Heart right ventricle (tissue), 16 donors: ENCODE measurements at regions of chr6 and their contacts with region 1.

Region 1: GRCh38 chr6:14228571-14228970 is 111.0 kb downstream of the CD83 start:
- DNase-seq: no peak
- ATAC-seq: peak in 1 of 8 donors; percentile 41
- H3K4me3 ChIP-seq: no peak overlapping the region
- H3K27ac ChIP-seq: no peak overlapping the region
- H3K4me1 ChIP-seq: peaks cover 0 to 8% (median 0%) of the 10 kb centered on the region in 9 donors
- H3K27me3 ChIP-seq: no peaks in the 10 kb centered on the region
- CTCF ChIP-seq: no peak

Region 2: GRCh38 chr6:13538084-13538483 is 690.5 kb before region 1 on chr6:
- intact Hi-C with region 1: no loop called
- DNase-seq: no peak
- ATAC-seq: peak in 7 of 8 donors; percentile 69 to 84 (median 75)
- H3K4me3 ChIP-seq: no peak overlapping the region
- H3K27ac ChIP-seq: peak overlapping the region in 7 of 10 donors; percentile 24 to 71 (median 34)
- H3K4me1 ChIP-seq: peaks cover 0 to 33% (median 12%) of the 10 kb centered on the region in 9 donors
- H3K27me3 ChIP-seq: no peaks in the 10 kb centered on the region
- CTCF ChIP-seq: peak; percentile 28 to 73 (median 59)

Region 3: DNA sequence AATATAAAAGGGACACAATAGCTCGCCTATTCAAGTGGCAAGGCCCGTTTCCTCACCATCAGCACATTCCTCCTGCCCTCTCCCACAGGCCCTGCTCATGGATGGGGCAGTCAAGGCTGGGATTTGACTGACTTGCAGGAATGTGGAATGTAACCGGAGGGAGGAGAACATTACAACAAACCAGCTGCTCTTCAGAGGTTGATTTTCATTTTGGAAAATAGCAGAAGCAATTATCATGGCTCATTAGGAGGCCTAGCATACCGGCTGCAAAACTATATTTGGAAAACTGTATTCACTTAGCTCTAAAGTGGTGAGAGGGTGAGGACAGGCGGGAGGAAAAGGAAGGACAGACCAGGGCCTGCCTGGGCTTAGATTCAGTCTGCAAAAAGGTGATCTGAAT is 172.7 kb after region 1 on chr6:
- intact Hi-C with region 1: loop called in 1 of 10 experiments (anchors 1 kb)
- DNase-seq: no peak
- ATAC-seq: peak; percentile 61 to 90 (median 77)
- H3K4me3 ChIP-seq: no peak overlapping the region
- H3K27ac ChIP-seq: peak overlapping the region in 6 of 10 donors; percentile 45 to 70 (median 58)
- H3K4me1 ChIP-seq: peaks cover 0 to 22% (median 0%) of the 10 kb centered on the region in 9 donors
- H3K27me3 ChIP-seq: no peaks in the 10 kb centered on the region
- CTCF ChIP-seq: no peak